Mammary epithelial cell (primary cell): ENCODE measurements at regions of chr1 and their contacts with region 1.

Region 1: GRCh38 chr1:5836776-5837440 is 155.3 kb downstream of the NPHP4 start:
- DNase-seq: no peak
- H3K4me3 ChIP-seq: no peak overlapping the region
- H3K27ac ChIP-seq: no peak overlapping the region
- H3K4me1 ChIP-seq: no peaks in the 10 kb centered on the region
- H3K27me3 ChIP-seq: no peaks in the 10 kb centered on the region
- CTCF ChIP-seq: no peak

Region 2: GRCh38 chr1:5667513-5668325 is 169.2 kb before region 1 on chr1:
- CTCF ChIA-PET with region 1: no interaction called
- dilution Hi-C with region 1: no loop called
- in situ Hi-C with region 1: no loop called
- intact Hi-C with region 1: no loop called
- DNase-seq: no peak
- H3K4me3 ChIP-seq: no peak overlapping the region
- H3K27ac ChIP-seq: no peak overlapping the region
- H3K4me1 ChIP-seq: no peaks in the 10 kb centered on the region
- H3K27me3 ChIP-seq: peaks cover 1% of the 10 kb centered on the region
- CTCF ChIP-seq: no peak

Region 3: GRCh38 chr1:5877761-5878530 is 41.0 kb after region 1 on chr1:
- CTCF ChIA-PET with region 1: no interaction called
- dilution Hi-C with region 1: loop called (anchors 5 kb)
- in situ Hi-C with region 1: no loop called
- intact Hi-C with region 1: no loop called
- DNase-seq: no peak
- H3K4me3 ChIP-seq: no peak overlapping the region
- H3K27ac ChIP-seq: no peak overlapping the region
- H3K4me1 ChIP-seq: no peaks in the 10 kb centered on the region
- H3K27me3 ChIP-seq: no peaks in the 10 kb centered on the region
- CTCF ChIP-seq: no peak